ENCODE measurements at regions of chr4 and their contacts with region 1.

Region 1: GRCh38 chr4:81214881-81215868 is at the start of gene PRKG2:
- DNase-seq: no peak
- ATAC-seq: peak; percentile 67
- H3K4me3 ChIP-seq: peak within 1 kb of the TSS; percentile 62
- H3K27ac ChIP-seq: no peak within 1 kb of the TSS
- H3K4me1 ChIP-seq: no peaks in the 10 kb centered on the region
- H3K27me3 ChIP-seq: peaks cover 32% of the 10 kb centered on the region
- CTCF ChIP-seq: no peak
- total RNA-seq, gene PRKG2: 0.40 and 0.55 TPM in 2 replicates

Region 2: DNA sequence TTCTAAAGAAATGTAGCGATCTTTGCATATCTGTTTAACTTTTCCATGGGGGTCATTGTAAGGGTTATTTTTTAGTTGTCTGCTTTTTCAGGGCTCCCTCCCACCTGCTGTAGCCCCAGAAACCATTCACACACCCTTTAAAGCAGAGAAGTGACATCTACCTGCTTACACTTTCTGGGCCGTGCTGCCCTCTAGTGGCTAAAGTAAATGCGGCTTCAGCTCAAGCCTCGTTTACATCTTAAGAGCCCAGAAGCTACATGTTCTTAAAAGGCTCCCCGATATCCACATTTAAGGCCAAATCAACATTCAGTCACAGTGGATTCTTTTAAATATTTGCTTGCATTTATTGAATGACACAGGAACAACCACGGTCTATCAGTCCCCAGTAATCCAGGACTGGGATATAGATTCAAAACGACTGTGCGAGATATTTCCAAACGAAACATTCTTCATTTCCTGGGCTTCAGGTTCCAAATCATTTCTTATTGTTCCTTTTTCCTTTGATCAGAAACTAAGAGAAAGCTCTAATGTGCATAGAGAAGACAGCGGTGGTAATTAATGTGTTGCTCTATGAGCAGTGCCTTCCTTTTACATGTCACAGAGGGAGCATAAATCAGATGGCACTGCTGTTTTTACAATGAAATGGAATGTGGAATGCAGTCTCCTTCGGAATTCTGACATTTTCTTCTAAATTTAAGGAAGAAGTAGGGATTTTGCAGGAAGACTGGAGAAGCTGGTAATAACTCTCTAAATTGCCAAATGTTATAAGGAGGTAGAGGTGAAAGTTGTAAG is 136.7 kb after region 1 on chr4:
- CTCF ChIA-PET with region 1: interaction called, 3 read pairs
- POLR2A ChIA-PET with region 1: no interaction called
- intact Hi-C with region 1: loop called (anchors 1 kb)
- DNase-seq: peak; percentile 75
- ATAC-seq: peak; percentile 83
- H3K4me3 ChIP-seq: no peak overlapping the region
- H3K27ac ChIP-seq: no peak overlapping the region
- H3K4me1 ChIP-seq: no peaks in the 10 kb centered on the region
- H3K27me3 ChIP-seq: no peaks in the 10 kb centered on the region
- CTCF ChIP-seq: peak; percentile 90

Measured in PC-3 (cell line).